ENCODE measurements at regions of chr22 and their contacts with region 1.

Region 1: GRCh38 chr22:45640291-45640940 is 31.2 kb upstream of the ATXN10 start:
- DNase-seq: no peak
- ATAC-seq: no peak
- H3K4me3 ChIP-seq: no peak overlapping the region
- H3K27ac ChIP-seq: no peak overlapping the region
- H3K4me1 ChIP-seq: peaks cover under 1% of the 10 kb centered on the region; the same call in 1 of the 2 replicates
- H3K27me3 ChIP-seq: peaks cover 39% of the 10 kb centered on the region
- CTCF ChIP-seq: no peak
- POLR2A ChIP-seq: no peak
- RAD21 ChIP-seq: no peak

Region 2: DNA sequence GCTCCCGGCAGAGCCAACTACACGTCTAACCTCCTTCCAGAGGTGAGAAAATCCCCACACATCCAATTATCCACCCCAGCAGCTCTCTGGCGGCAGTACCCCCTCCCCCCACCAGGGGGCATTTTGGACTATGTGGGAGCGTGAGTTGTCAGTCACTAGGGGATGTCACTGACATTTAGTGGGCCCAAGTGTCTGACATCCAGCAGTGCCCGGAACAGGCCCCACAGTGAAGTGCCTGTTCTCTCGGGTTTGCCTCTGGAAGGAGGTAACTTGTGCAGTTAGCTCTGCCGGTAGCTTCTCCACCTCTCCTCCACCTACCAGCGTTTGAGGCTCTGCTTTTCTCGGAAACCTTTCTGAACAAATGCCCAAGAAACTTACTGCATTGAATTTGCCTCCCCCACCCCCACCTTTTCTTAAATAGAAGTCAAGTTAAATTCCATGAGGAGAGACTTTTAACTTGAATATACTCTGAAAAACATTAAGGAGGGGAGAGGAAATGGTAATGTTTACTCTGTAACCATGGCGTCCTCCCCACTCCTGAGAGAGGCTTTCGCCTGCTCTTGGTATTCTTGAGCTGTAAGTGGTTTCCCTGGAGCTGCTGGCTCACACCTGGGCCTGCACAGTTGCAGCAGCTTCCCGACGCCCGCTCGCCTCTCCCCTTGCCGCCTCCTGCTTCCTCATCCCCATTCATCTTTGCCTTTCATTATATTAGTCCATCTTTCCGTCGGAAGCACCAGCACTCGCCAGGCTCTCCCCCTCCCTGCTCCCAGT is 223.8 kb after region 1 on chr22:
- CTCF ChIA-PET with region 1: no interaction called
- POLR2A ChIA-PET with region 1: no interaction called
- dilution Hi-C with region 1: no loop called
- in situ Hi-C with region 1: loop called (anchors 10 kb)
- intact Hi-C with region 1: loop called (anchors 2 kb)
- DNase-seq: peak; percentile 63
- ATAC-seq: peak; percentile 62
- H3K4me3 ChIP-seq: no peak overlapping the region
- H3K27ac ChIP-seq: no peak overlapping the region
- H3K4me1 ChIP-seq: no peaks in the 10 kb centered on the region; the same call in 1 of the 2 replicates
- H3K27me3 ChIP-seq: peaks cover 32% of the 10 kb centered on the region
- CTCF ChIP-seq: peak; percentile 76
- POLR2A ChIP-seq: no peak
- RAD21 ChIP-seq: peak; percentile 63

Region 3: GRCh38 chr22:45984316-45984916 is 344.0 kb after region 1 on chr22:
- CTCF ChIA-PET with region 1: no interaction called
- POLR2A ChIA-PET with region 1: no interaction called
- dilution Hi-C with region 1: no loop called
- in situ Hi-C with region 1: loop called (anchors 5 kb)
- intact Hi-C with region 1: no loop called
- DNase-seq: no peak
- ATAC-seq: no peak
- H3K4me3 ChIP-seq: no peak overlapping the region
- H3K27ac ChIP-seq: no peak overlapping the region
- H3K4me1 ChIP-seq: no peaks in the 10 kb centered on the region
- H3K27me3 ChIP-seq: peaks cover 31% of the 10 kb centered on the region
- CTCF ChIP-seq: no peak
- POLR2A ChIP-seq: no peak
- RAD21 ChIP-seq: no peak

Measured in IMR-90 (cell line).